A549 (cell line): ENCODE measurements at regions of chr19 and their contacts with region 1.

Region 1: GRCh38 chr19:44570984-44571684 is 41.7 kb upstream of the CEACAM20 start:
- DNase-seq: peak; percentile 82 to 86
- ATAC-seq: peak; percentile 87 to 95
- H3K4me3 ChIP-seq: no peak overlapping the region
- H3K27ac ChIP-seq: peak overlapping the region in 1 of 2 experiments; percentile 57; a peak in 2 of 6 replicates
- H3K4me1 ChIP-seq: peaks cover 8% of the 10 kb centered on the region
- CTCF ChIP-seq: peak; percentile 98
- EP300 ChIP-seq: no peak
- POLR2A ChIP-seq: no peak
- RAD21 ChIP-seq: peak; percentile 95 to 96

Region 2: GRCh38 chr19:44553478-44554171 is 17.5 kb before region 1 on chr19:
- CTCF ChIA-PET with region 1: interaction called, 11 read pairs
- POLR2A ChIA-PET with region 1: no interaction called
- DNase-seq: no peak
- ATAC-seq: peak; percentile 20 to 38; a peak in 2 of 6 replicates
- H3K4me3 ChIP-seq: no peak overlapping the region
- H3K27ac ChIP-seq: no peak overlapping the region
- H3K4me1 ChIP-seq: no peaks in the 10 kb centered on the region
- CTCF ChIP-seq: no peak
- EP300 ChIP-seq: no peak
- POLR2A ChIP-seq: no peak
- RAD21 ChIP-seq: no peak

Region 3: DNA sequence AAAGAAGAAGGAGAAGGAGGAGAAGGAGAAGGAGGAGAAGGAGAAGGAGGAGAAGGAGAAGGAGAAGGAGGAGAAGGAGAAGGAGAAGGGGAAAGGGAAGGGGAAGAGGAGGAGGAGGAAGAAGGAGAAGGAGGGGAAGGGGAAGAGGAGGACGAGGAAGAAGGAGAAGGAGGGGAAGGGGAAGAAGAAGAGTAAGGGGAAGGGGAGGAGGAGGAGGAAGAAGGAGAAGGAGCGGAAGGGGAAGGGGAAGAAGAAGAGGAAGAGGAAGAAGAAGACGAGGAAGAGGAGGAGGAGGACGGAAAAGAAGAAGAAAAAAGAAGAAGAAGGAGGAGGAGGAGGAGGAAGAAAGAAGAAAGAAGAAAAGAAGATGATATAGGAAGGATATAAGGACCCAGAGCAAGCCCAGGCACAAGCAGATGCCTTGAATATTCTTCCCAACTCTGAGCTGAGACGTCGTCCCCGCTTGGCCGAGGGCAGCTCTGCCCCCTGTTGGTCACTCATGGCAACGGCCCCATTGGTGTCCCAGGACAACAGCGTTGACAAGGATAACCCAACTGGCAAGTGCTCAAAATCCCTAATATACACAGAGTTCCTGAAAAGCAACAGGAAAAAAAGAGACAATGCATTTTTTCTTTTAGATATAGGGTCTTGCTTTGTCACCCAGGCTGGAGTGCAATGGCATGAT is 11.6 kb after region 1 on chr19:
- CTCF ChIA-PET with region 1: interaction called, 75 read pairs
- POLR2A ChIA-PET with region 1: no interaction called
- DNase-seq: peak; percentile 58 to 65
- ATAC-seq: peak; percentile 44 to 80; a peak in 3 of 6 replicates
- H3K4me3 ChIP-seq: no peak overlapping the region
- H3K27ac ChIP-seq: peak overlapping the region in 1 of 2 experiments; percentile 7; a peak in 1 of 6 replicates
- H3K4me1 ChIP-seq: peaks cover 23% of the 10 kb centered on the region
- CTCF ChIP-seq: peak; percentile 50
- EP300 ChIP-seq: no peak; a peak in 1 of 5 replicates
- POLR2A ChIP-seq: no peak
- RAD21 ChIP-seq: peak in 1 of 2 experiments; percentile 60; a peak in 3 of 5 replicates

Region 4: GRCh38 chr19:44587963-44588770 is 17.0 kb after region 1 on chr19:
- CTCF ChIA-PET with region 1: interaction called, 75 read pairs
- POLR2A ChIA-PET with region 1: no interaction called
- DNase-seq: peak; percentile 84 to 85
- ATAC-seq: peak; percentile 85 to 96
- H3K4me3 ChIP-seq: peak overlapping the region; percentile 13; the same call in 1 of the 3 replicates
- H3K27ac ChIP-seq: peak overlapping the region; percentile 90 to 94
- H3K4me1 ChIP-seq: peaks cover 75% of the 10 kb centered on the region
- CTCF ChIP-seq: peak; percentile 83
- EP300 ChIP-seq: peak; percentile 71 to 81; a peak in 3 of 5 replicates
- POLR2A ChIP-seq: no peak
- RAD21 ChIP-seq: peak; percentile 71 to 93

Region 5: GRCh38 chr19:44596428-44597130 is 25.4 kb after region 1 on chr19:
- CTCF ChIA-PET with region 1: interaction called, 75 read pairs
- POLR2A ChIA-PET with region 1: no interaction called
- DNase-seq: peak; percentile 68 to 72
- ATAC-seq: peak; percentile 72 to 83
- H3K4me3 ChIP-seq: no peak overlapping the region
- H3K27ac ChIP-seq: peak overlapping the region; percentile 67 to 79
- H3K4me1 ChIP-seq: peaks cover 46% of the 10 kb centered on the region
- CTCF ChIP-seq: no peak
- EP300 ChIP-seq: no peak
- POLR2A ChIP-seq: no peak
- RAD21 ChIP-seq: 0 out of 5 replicates have a peak, but pooled peaks of 1 of the 2 experiments have one; percentile 12

Region 6: DNA sequence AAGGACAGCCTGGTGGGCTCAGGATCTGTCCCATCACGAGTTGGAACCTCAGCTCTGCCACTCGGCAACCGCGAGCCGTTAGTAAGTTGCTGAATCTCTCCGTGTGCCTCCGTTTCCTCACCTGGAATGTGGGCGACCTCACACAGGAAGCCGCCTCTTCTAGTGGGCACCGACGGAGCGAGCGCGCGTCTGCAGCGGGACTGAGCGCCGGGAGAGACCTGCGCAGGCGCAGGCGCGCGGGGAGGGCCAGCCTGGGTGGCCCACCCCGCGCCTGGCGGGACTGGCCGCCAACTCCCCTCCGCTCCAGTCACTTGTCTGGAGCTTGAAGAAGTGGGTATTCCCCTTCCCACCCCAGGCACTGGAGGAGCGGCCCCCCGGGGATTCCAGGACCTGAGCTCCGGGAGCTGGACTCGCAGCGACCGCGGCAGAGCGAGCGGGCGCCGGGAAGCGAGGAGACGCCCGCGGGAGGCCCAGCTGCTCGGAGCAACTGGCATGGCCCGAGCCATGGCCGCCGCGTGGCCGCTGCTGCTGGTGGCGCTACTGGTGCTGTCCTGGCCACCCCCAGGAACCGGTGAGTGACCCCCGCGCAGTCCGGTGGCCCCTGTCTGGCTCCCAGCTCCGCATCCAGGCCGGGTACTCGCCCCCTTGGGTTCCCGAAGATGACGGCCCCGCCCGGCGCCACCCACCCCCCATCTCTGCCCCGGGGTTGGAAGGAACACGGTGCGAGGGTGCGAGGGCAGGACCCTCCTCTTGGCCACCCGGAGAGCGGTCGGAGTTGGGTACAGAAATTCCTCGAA is 72.7 kb after region 1 on chr19 and contains the start of gene PVR:
- CTCF ChIA-PET with region 1: interaction called, 17 read pairs
- POLR2A ChIA-PET with region 1: no interaction called
- DNase-seq: peak; percentile 91 to 98
- ATAC-seq: peak; percentile 86 to 90
- H3K4me3 ChIP-seq: peak within 1 kb of the TSS; percentile 61
- H3K27ac ChIP-seq: peak within 1 kb of the TSS; percentile 91 to 97
- H3K4me1 ChIP-seq: peaks cover 75% of the 10 kb centered on the region
- CTCF ChIP-seq: no peak
- EP300 ChIP-seq: peak in 1 of 2 experiments; percentile 51; a peak in 1 of 5 replicates
- POLR2A ChIP-seq: peak; percentile 72
- RAD21 ChIP-seq: no peak; a peak in 1 of 5 replicates
- polyA plus RNA-seq, gene PVR: 108 and 110 TPM in 2 replicates

Region 7: GRCh38 chr19:44662691-44663385 is 91.7 kb after region 1 on chr19:
- CTCF ChIA-PET with region 1: interaction called, 71 read pairs
- POLR2A ChIA-PET with region 1: no interaction called
- DNase-seq: no peak
- ATAC-seq: no peak
- H3K4me3 ChIP-seq: no peak overlapping the region
- H3K27ac ChIP-seq: peak overlapping the region in 1 of 2 experiments; percentile 40; a peak in 2 of 6 replicates
- H3K4me1 ChIP-seq: peaks cover 18% of the 10 kb centered on the region; the same call in 1 of the 3 replicates
- CTCF ChIP-seq: no peak
- EP300 ChIP-seq: no peak
- POLR2A ChIP-seq: no peak
- RAD21 ChIP-seq: no peak